ENCODE measurements at regions of chr9 and their contacts with region 1.

Region 1: GRCh38 chr9:112333639-112334431 is 416 bp upstream of the PTBP3 start:
- DNase-seq: peak; percentile 97
- ATAC-seq: peak; percentile 86
- H3K4me3 ChIP-seq: peak overlapping the region; percentile 71 to 93 (median 90)
- H3K4me3 Mint-ChIP-seq: peak overlapping the region; percentile 98
- H3K27ac ChIP-seq: peak overlapping the region; percentile 89 to 97
- H3K27ac Mint-ChIP-seq: peak overlapping the region; percentile 99
- H3K4me1 ChIP-seq: peaks cover 16 to 25% of the 10 kb centered on the region in 2 donors
- H3K4me1 Mint-ChIP-seq: peaks cover 35% of the 10 kb centered on the region
- H3K27me3 ChIP-seq: no peaks in the 10 kb centered on the region
- H3K27me3 Mint-ChIP-seq: no peaks in the 10 kb centered on the region
- CTCF ChIP-seq: peak; percentile 66

Region 2: DNA sequence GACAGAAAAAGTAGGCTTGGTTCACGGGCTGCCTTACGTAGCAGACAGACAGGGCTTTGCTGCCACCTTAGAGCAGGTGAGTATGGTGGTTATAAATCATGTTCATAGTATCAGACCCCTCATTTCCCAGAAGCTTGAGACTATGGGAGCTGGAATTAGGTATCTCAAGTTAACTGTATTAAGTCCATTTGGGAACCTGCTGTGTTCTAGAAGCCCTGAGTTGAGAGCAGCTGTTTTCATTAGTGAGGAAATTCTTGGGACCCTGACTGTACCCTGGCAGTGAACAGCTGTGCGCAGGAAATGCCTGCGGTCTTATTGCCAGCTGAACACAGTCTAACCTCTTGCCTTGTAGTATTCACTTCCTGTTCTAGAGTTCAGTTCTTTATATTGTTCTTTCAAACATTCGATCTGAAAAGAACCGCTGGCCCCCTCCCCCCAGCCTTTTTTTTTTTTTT is 407.4 kb before region 1 on chr9:
- CTCF ChIA-PET with region 1: no interaction called
- POLR2A ChIA-PET with region 1: no interaction called
- intact Hi-C with region 1: loop called (anchors 10 kb)
- DNase-seq: peak; percentile 86
- ATAC-seq: peak; percentile 99
- H3K4me3 ChIP-seq: no peak overlapping the region
- H3K4me3 Mint-ChIP-seq: peak overlapping the region; percentile 33
- H3K27ac ChIP-seq: peak overlapping the region; percentile 25 to 72
- H3K27ac Mint-ChIP-seq: peak overlapping the region; percentile 90
- H3K4me1 ChIP-seq: peaks cover 22 to 32% of the 10 kb centered on the region in 2 donors
- H3K4me1 Mint-ChIP-seq: peaks cover 39% of the 10 kb centered on the region
- H3K27me3 ChIP-seq: no peaks in the 10 kb centered on the region
- H3K27me3 Mint-ChIP-seq: no peaks in the 10 kb centered on the region
- CTCF ChIP-seq: no peak

Region 3: GRCh38 chr9:112288029-112288428 is 45.8 kb before region 1 on chr9:
- CTCF ChIA-PET with region 1: no interaction called
- POLR2A ChIA-PET with region 1: interaction called, 5 read pairs
- intact Hi-C with region 1: loop called (anchors 5 kb)
- DNase-seq: no peak
- ATAC-seq: no peak
- H3K4me3 ChIP-seq: no peak overlapping the region
- H3K4me3 Mint-ChIP-seq: no peak overlapping the region
- H3K27ac ChIP-seq: no peak overlapping the region
- H3K27ac Mint-ChIP-seq: no peak overlapping the region
- H3K4me1 ChIP-seq: peaks cover 0 to 5% of the 10 kb centered on the region in 2 donors
- H3K4me1 Mint-ChIP-seq: peaks cover 24% of the 10 kb centered on the region
- H3K27me3 ChIP-seq: no peaks in the 10 kb centered on the region
- H3K27me3 Mint-ChIP-seq: no peaks in the 10 kb centered on the region
- CTCF ChIP-seq: no peak

Region 4: GRCh38 chr9:112366591-112366990 is 32.8 kb after region 1 on chr9:
- CTCF ChIA-PET with region 1: no interaction called
- POLR2A ChIA-PET with region 1: no interaction called
- intact Hi-C with region 1: no loop called
- DNase-seq: no peak
- ATAC-seq: no peak
- H3K4me3 ChIP-seq: no peak overlapping the region
- H3K4me3 Mint-ChIP-seq: no peak overlapping the region
- H3K27ac ChIP-seq: no peak overlapping the region
- H3K27ac Mint-ChIP-seq: no peak overlapping the region
- H3K4me1 ChIP-seq: peaks cover 0 to 4% of the 10 kb centered on the region in 2 donors
- H3K4me1 Mint-ChIP-seq: peaks cover 2% of the 10 kb centered on the region
- H3K27me3 ChIP-seq: no peaks in the 10 kb centered on the region
- H3K27me3 Mint-ChIP-seq: no peaks in the 10 kb centered on the region
- CTCF ChIP-seq: no peak

Region 5: GRCh38 chr9:112379177-112380101 is 45.6 kb after region 1 on chr9:
- CTCF ChIA-PET with region 1: interaction called, 4 read pairs
- POLR2A ChIA-PET with region 1: interaction called, 13 read pairs
- intact Hi-C with region 1: loop called (anchors 1 kb)
- DNase-seq: peak; percentile 96
- ATAC-seq: peak; percentile 93
- H3K4me3 ChIP-seq: peak overlapping the region; percentile 82 to 98 (median 89)
- H3K4me3 Mint-ChIP-seq: peak overlapping the region; percentile 95
- H3K27ac ChIP-seq: peak overlapping the region; percentile 78 to 88
- H3K27ac Mint-ChIP-seq: peak overlapping the region; percentile 92
- H3K4me1 ChIP-seq: peaks cover 27 to 30% of the 10 kb centered on the region in 2 donors
- H3K4me1 Mint-ChIP-seq: peaks cover 59% of the 10 kb centered on the region
- H3K27me3 ChIP-seq: no peaks in the 10 kb centered on the region
- H3K27me3 Mint-ChIP-seq: no peaks in the 10 kb centered on the region
- CTCF ChIP-seq: no peak

Region 6: GRCh38 chr9:112486221-112487007 is 152.6 kb after region 1 on chr9 and contains the start of gene KIAA1958:
- CTCF ChIA-PET with region 1: no interaction called
- POLR2A ChIA-PET with region 1: interaction called, 4 read pairs
- intact Hi-C with region 1: loop called (anchors 2 kb)
- DNase-seq: peak; percentile 88
- ATAC-seq: peak; percentile 87
- H3K4me3 ChIP-seq: peak within 1 kb of the TSS; percentile 71 to 85 (median 77)
- H3K4me3 Mint-ChIP-seq: peak within 1 kb of the TSS; percentile 100
- H3K27ac ChIP-seq: peak within 1 kb of the TSS; percentile 58 to 69
- H3K27ac Mint-ChIP-seq: peak within 1 kb of the TSS; percentile 96
- H3K4me1 ChIP-seq: peaks cover 5 to 13% of the 10 kb centered on the region in 2 donors
- H3K4me1 Mint-ChIP-seq: peaks cover 22% of the 10 kb centered on the region
- H3K27me3 ChIP-seq: no peaks in the 10 kb centered on the region
- H3K27me3 Mint-ChIP-seq: no peaks in the 10 kb centered on the region
- CTCF ChIP-seq: no peak
- total RNA-seq, gene KIAA1958: 15.3 and 17.2 TPM in 2 replicates

Region 7: DNA sequence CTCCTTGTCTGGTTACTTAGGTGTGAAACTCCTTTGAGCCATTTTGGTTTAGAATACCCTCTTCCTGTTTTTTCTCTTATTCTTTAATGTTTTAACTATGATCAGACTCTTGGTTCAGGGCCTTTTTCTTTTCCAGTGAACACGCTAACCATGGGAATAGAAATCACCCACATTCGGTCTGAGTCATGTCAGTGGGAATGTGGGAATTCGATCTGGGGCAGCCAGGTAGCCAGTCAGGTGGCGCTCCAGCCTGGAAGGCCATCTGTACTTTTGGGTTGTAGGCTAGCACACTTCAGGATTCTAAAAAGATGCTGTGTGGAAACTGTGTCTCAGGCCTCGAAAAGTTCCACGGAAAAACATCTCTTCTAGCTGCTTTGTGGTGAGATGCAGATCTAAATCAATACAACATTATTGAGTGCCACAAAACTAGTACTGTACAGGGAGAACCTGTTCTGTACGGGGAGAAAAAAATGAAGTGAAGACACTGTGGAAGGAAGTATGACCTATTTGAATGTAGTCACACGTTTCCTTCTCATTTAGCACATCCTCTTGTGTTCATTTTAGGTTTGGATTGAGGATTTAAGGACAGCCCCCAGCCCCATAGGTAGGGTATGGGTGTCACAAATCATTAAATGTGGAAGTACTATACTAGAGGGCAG is 453.1 kb after region 1 on chr9:
- CTCF ChIA-PET with region 1: no interaction called
- POLR2A ChIA-PET with region 1: no interaction called
- intact Hi-C with region 1: no loop called
- DNase-seq: peak; percentile 56
- ATAC-seq: peak; percentile 60
- H3K4me3 ChIP-seq: peak overlapping the region in 1 of 5 experiments; percentile 14
- H3K4me3 Mint-ChIP-seq: peak overlapping the region; percentile 78
- H3K27ac ChIP-seq: peak overlapping the region; percentile 53 to 60
- H3K27ac Mint-ChIP-seq: no peak overlapping the region
- H3K4me1 ChIP-seq: peaks cover 21 to 24% of the 10 kb centered on the region in 2 donors
- H3K4me1 Mint-ChIP-seq: peaks cover 43% of the 10 kb centered on the region
- H3K27me3 ChIP-seq: no peaks in the 10 kb centered on the region
- H3K27me3 Mint-ChIP-seq: no peaks in the 10 kb centered on the region
- CTCF ChIP-seq: no peak

Region 8: GRCh38 chr9:113221003-113221799 is 887.4 kb after region 1 on chr9 and contains the starts of genes FKBP15 and SLC31A1:
- CTCF ChIA-PET with region 1: no interaction called
- POLR2A ChIA-PET with region 1: no interaction called
- intact Hi-C with region 1: loop called (anchors 5 kb)
- DNase-seq: peak; percentile 98
- ATAC-seq: peak; percentile 98
- H3K4me3 ChIP-seq: peak within 1 kb of the TSS; percentile 77 to 97 (median 94)
- H3K4me3 Mint-ChIP-seq: peak within 1 kb of the TSS; percentile 95
- H3K27ac ChIP-seq: peak within 1 kb of the TSS; percentile 59 to 84
- H3K27ac Mint-ChIP-seq: peak within 1 kb of the TSS; percentile 95
- H3K4me1 ChIP-seq: peaks cover 33 to 35% of the 10 kb centered on the region in 2 donors
- H3K4me1 Mint-ChIP-seq: peaks cover 48% of the 10 kb centered on the region
- H3K27me3 ChIP-seq: no peaks in the 10 kb centered on the region
- H3K27me3 Mint-ChIP-seq: no peaks in the 10 kb centered on the region
- CTCF ChIP-seq: no peak
- total RNA-seq, gene FKBP15: 40.6 and 41.2 TPM in 2 replicates
- total RNA-seq, gene SLC31A1: 3.2 and 3.5 TPM in 2 replicates

Measured in B cell (primary cell).